ENCODE measurements at regions of chr5 and their contacts with region 1.

Region 1: GRCh38 chr5:88690409-88691229 is 192.4 kb downstream of the MEF2C start:
- DNase-seq: peak; percentile 41 to 82 (median 71)
- H3K4me3 ChIP-seq: peak overlapping the region in 2 of 4 donors; percentile 7 to 55
- H3K27ac ChIP-seq: no peak overlapping the region
- H3K4me1 ChIP-seq: peaks cover 9 to 14% of the 10 kb centered on the region in 2 donors
- H3K27me3 ChIP-seq: peaks cover 67% of the 10 kb centered on the region
- CTCF ChIP-seq: peak; percentile 84 to 97 (median 88)
- POLR2A ChIP-seq: no peak

Region 2: DNA sequence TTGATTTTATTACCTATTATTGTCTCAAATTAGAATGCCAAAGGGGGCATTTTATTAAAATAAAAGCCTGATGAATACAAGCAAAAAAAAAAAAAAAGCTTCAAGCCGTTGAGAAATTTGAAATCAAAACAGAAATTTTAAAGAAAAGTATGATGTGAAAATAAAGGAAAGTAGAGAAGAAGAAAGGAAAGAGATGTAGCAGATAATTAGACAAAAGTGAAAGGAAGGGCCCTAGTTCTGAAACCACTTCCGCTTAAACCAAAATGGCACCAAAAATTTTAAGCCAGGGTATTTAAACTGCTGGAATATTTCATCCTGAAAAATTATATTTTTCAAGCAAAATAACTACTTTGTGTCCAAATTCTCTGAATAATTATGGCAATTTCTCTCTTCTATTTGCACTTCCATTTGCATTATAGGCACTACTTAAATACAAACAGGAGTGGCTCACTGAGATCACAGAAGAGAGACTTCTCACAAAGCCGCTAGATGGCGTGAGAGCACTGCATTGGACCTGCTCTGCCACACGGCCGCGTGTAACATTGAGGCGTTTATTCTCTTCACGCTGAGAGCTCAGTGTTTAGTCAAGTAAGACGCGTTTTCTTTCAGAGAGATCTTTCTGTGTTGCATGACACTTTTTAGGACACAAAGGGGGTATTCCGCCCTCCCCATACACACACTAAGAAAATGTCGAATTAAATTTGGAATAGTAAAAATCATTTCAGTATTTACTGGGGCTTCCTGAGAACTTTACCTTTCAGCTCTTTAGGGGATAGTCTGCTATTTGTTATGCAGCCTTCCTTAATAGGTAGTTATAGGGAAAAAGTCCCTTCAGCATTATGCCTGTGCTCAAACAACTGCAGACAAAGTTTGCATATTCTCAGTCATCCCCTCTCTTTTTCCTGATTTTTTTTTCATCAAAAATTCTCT is 909.5 kb before region 1 on chr5:
- intact Hi-C with region 1: loop called in 1 of 2 experiments (anchors 5 kb)
- DNase-seq: peak; percentile 73 to 91 (median 83)
- H3K4me3 ChIP-seq: no peak overlapping the region
- H3K27ac ChIP-seq: no peak overlapping the region
- H3K4me1 ChIP-seq: no peaks in the 10 kb centered on the region
- H3K27me3 ChIP-seq: peaks cover 28% of the 10 kb centered on the region
- CTCF ChIP-seq: peak; percentile 77 to 97 (median 91)
- POLR2A ChIP-seq: no peak

Region 3: DNA sequence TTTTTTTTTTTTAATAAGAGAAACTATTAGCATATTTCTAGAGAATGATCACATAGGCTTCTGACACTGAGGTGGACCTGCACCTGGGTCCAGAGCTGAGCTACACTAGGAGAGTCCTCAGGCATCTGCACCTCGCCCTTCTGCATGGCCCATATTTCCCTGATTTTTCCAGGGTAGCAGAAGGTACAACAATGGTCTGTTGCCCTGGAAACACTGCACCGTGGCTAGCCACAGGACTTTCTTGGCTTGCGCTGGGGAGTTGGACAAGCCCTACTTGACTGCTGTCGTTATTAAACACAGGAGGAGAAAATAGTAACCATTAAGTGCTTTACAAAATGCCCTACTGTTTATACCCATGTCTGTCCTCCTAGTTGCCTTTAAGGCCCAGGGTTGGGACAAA is 808.1 kb after region 1 on chr5:
- intact Hi-C with region 1: no loop called
- DNase-seq: no peak
- H3K4me3 ChIP-seq: no peak overlapping the region
- H3K27ac ChIP-seq: no peak overlapping the region
- H3K4me1 ChIP-seq: no peaks in the 10 kb centered on the region
- H3K27me3 ChIP-seq: no peaks in the 10 kb centered on the region
- CTCF ChIP-seq: no peak
- POLR2A ChIP-seq: no peak

Measured in adrenal gland (tissue), 19 donors.